GM12878 (cell line): ENCODE measurements at regions of chr2 and their contacts with region 1.

Region 1: GRCh38 chr2:62140426-62141141 is 55.3 kb upstream of the B3GNT2 start:
- DNase-seq: peak; percentile 85
- ATAC-seq: peak; percentile 68
- H3K4me3 ChIP-seq: no peak overlapping the region
- H3K27ac ChIP-seq: peak overlapping the region; percentile 90
- H3K4me1 ChIP-seq: peaks cover 62% of the 10 kb centered on the region
- H3K27me3 ChIP-seq: no peaks in the 10 kb centered on the region
- CTCF ChIP-seq: no peak
- EP300 ChIP-seq: peak in 1 of 2 experiments; percentile 45; a peak in 1 of 4 replicates
- POLR2A ChIP-seq: no peak
- RAD21 ChIP-seq: peak; percentile 29; the same call in 1 of the 2 replicates

Region 2: DNA sequence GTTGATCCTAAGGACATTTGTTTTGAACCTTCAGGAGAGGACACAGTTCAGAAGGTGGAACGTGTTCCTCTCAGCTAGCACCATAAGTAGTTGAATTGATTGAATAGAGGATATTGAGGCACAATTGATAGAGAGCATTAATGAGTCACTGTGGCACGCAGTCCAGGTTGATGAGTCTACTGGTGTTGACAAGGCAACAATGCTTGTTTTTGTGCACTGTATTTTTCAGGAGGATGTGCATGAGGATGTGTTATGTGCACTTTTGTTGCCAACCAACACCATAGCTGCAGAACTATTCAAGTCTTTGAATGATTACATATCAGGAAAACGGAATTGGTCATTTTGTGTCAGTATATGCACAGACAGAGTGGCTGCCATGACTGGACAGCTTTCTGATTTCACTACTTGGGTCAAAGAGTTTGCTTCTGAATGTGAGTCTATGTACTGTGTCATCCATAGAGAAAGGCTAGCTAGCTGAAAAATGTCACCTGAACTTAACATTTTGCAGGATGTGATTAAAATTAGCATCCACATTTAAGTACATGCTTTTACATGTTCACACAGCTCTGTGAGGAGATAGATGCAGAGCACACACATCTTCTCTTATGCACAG is 84.8 kb before region 1 on chr2:
- CTCF ChIA-PET with region 1: interaction called, 4 read pairs
- POLR2A ChIA-PET with region 1: no interaction called
- RAD21 ChIA-PET with region 1: interaction called, 13 read pairs
- SMC1A ChIA-PET with region 1: interaction called, 3 read pairs
- in situ Hi-C with region 1: no loop called
- intact Hi-C with region 1: no loop called
- DNase-seq: no peak
- ATAC-seq: peak; percentile 17; the same call in 2 of the 3 replicates
- H3K4me3 ChIP-seq: no peak overlapping the region
- H3K27ac ChIP-seq: no peak overlapping the region
- H3K4me1 ChIP-seq: peaks cover 18% of the 10 kb centered on the region
- H3K27me3 ChIP-seq: no peaks in the 10 kb centered on the region
- CTCF ChIP-seq: no peak
- EP300 ChIP-seq: no peak
- POLR2A ChIP-seq: no peak
- RAD21 ChIP-seq: no peak

Region 3: DNA sequence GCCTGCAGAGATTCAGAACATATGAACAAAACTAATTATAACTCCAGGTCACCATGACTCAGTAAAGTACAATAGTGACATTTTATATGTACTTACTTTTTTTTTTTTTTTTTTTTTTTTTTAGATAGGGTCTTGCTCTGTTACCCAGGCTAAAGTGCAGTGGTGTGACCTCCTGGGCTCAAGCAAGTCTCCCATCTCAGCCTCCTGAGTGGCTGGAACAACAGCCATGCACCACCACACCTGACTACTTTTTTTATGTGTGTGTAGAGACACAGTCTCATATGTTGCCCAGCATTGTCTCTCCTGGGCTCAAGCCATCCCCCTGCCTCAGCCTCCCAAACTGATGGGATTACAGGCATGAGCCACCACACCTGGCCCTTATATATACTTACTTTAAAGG is 75.3 kb before region 1 on chr2:
- CTCF ChIA-PET with region 1: interaction called, 3 read pairs
- POLR2A ChIA-PET with region 1: interaction called, 7 read pairs
- RAD21 ChIA-PET with region 1: interaction called, 13 read pairs
- SMC1A ChIA-PET with region 1: interaction called, 8 read pairs
- in situ Hi-C with region 1: no loop called
- intact Hi-C with region 1: loop called (anchors 5 kb)
- DNase-seq: no peak
- ATAC-seq: peak; percentile 56
- H3K4me3 ChIP-seq: peak overlapping the region; percentile 11; the same call in 1 of the 2 replicates
- H3K27ac ChIP-seq: peak overlapping the region; percentile 81
- H3K4me1 ChIP-seq: peaks cover 37% of the 10 kb centered on the region
- H3K27me3 ChIP-seq: no peaks in the 10 kb centered on the region
- CTCF ChIP-seq: no peak
- EP300 ChIP-seq: no peak
- POLR2A ChIP-seq: no peak
- RAD21 ChIP-seq: no peak